ENCODE measurements at regions of chr15 and their contacts with region 1.

Region 1: DNA sequence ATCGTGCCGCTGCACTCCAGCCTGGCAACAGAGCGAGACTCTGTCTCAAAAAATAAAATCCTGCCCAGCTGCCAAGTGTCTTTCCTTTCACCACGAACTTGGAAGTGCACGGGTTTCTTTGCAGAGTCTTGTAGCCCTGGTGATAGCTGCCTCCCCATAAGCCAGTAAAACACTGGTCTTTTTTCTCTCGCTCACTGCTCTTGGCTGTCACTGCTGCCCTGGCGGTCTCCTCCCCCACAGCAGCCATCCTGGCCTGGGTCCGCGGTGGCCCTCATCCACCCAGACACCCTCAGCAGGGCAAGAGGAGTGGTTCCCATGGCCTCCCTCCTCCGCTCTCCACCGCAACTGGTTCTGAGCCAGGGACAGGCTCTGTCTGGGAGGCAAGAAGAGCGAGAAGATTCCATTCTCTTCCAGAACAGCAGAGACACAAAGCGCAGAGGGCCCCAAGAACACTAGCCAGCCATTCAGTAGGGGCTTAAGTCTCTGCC is 44.4 kb downstream of the KLHL25 start:
- DNase-seq: no peak
- H3K4me3 ChIP-seq: no peak overlapping the region
- H3K27ac ChIP-seq: no peak overlapping the region
- H3K4me1 ChIP-seq: peaks cover 6 to 45% (median 33%) of the 10 kb centered on the region in 4 experiments
- H3K27me3 ChIP-seq: no peaks in the 10 kb centered on the region
- CTCF ChIP-seq: no peak
- EP300 ChIP-seq: no peak
- POLR2A ChIP-seq: no peak
- RAD21 ChIP-seq: no peak

Region 2: GRCh38 chr15:85685356-85685755 is 65.0 kb before region 1 on chr15:
- CTCF ChIA-PET with region 1: no interaction called
- POLR2A ChIA-PET with region 1: no interaction called
- DNase-seq: no peak
- H3K4me3 ChIP-seq: no peak overlapping the region
- H3K27ac ChIP-seq: no peak overlapping the region
- H3K4me1 ChIP-seq: peaks cover 0 to 6% (median 6%) of the 10 kb centered on the region in 4 experiments; a peak in 4 of 7 replicates
- H3K27me3 ChIP-seq: no peaks in the 10 kb centered on the region
- CTCF ChIP-seq: no peak
- EP300 ChIP-seq: no peak
- POLR2A ChIP-seq: no peak
- RAD21 ChIP-seq: no peak

Region 3: DNA sequence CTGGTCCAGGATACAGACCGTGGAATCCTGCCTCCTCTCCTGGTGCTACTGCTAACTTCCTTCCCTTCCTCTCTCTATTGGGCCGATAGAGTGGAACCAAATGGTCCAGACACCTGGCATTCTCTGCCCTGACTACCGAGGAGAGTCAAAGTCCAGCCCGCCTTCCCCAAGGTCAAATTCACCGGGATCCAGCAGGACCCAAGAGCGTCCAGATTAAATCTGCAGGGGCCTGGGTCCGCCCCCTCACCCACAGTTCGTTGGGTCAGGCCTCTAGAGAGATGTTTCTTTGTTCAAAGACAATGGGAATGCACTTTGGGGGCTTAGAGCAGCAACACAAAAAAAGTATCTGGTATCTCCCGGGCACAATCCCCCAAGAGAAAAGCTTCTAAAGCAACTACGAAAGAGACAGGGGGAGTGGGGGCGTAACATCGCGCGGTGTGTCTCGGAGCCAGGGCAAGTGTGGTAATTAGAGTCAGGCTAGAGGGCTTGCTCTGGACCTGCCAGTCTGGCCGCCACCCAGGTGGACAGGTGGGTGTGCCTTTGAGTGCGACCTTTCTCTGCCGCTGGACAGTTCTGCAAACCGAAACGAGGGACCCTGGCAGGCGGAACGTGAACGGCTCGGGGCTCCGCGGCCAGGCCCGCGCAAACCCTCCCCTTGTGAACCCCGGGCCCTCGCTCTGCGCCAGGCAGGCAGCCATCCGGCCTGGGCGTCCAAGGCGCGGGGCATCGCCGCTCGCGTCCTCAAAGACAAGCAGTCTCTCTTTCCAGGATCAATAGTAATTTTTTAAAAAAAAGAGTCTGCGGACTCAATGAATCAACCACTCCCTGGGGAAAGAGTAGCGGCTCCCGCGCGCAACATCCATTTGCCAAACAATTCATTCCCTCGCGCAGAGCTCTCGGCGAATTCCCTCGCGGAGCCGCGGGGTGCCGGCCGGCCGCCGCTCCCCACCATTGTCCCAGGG is 43.6 kb after region 1 on chr15:
- CTCF ChIA-PET with region 1: interaction called, 10 read pairs
- POLR2A ChIA-PET with region 1: interaction called, 9 read pairs
- DNase-seq: no peak
- H3K4me3 ChIP-seq: peak overlapping the region; percentile 59 to 94 (median 90)
- H3K27ac ChIP-seq: peak overlapping the region; percentile 71; the same call in 1 of the 2 replicates
- H3K4me1 ChIP-seq: peaks cover 9 to 22% (median 14%) of the 10 kb centered on the region in 4 experiments
- H3K27me3 ChIP-seq: peaks cover 0 to 4% (median 1%) of the 10 kb centered on the region in 4 experiments; a peak in 3 of 7 replicates
- CTCF ChIP-seq: no peak
- EP300 ChIP-seq: no peak
- POLR2A ChIP-seq: no peak; a peak in 1 of 3 replicates
- RAD21 ChIP-seq: no peak

Region 4: GRCh38 chr15:85840065-85840801 is 89.9 kb after region 1 on chr15:
- CTCF ChIA-PET with region 1: interaction called, 20 read pairs
- POLR2A ChIA-PET with region 1: no interaction called
- DNase-seq: peak; percentile 73 to 95
- H3K4me3 ChIP-seq: peak overlapping the region in 3 of 4 experiments; percentile 14 to 51 (median 30); a peak in 5 of 8 replicates
- H3K27ac ChIP-seq: no peak overlapping the region
- H3K4me1 ChIP-seq: peaks cover 0 to 4% (median 1%) of the 10 kb centered on the region in 4 experiments; a peak in 2 of 7 replicates
- H3K27me3 ChIP-seq: peaks cover 0 to 8% (median 3%) of the 10 kb centered on the region in 4 experiments; a peak in 3 of 7 replicates
- CTCF ChIP-seq: peak; percentile 78 to 96 (median 92)
- EP300 ChIP-seq: 0 out of 3 replicates have a peak, but pooled peaks of 1 of the 2 experiments have one; percentile 9
- POLR2A ChIP-seq: no peak
- RAD21 ChIP-seq: peak; percentile 70 to 79

Measured in H1 (cell line).